Left ventricle myocardium superior (tissue), 1 donor: ENCODE measurements at regions of chr12 and their contacts with region 1.

Region 1: DNA sequence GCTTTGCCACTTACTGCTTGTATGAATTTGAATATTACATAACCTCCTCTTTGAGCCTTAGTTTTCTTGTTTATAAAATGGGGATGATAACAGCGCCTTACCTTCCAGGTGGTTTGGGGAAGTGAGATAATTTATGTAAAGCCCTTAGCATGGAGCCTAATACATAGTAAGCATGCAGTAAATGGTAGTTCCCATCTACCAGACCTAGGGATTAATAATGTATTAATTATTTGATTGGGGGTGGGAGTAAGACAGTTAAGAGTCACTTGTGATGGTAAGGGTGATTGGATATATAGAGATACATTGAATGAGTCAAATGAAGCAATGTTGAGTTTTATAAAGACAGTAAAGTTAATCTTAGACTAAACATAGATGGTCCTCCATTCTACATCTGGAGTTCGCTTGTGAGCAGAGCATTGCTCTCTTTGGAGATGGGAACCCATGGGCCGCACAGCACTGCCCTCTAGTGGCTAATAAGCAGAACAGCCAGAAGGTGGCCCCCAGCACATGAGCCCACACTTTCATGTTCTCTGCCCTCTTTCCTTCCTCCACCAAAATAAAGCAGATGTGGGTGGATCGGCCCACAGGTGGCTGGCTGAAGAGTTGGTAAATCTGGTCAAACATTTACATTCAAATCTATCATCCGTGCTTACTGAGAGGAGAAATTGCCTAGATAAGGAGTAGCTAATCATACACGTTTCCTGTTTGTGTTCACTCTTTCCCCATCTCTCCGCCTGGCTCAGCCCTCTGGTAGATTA is 26.5 kb upstream of the TAMALIN start:
- DNase-seq: peak; percentile 72
- ATAC-seq: peak; percentile 93

Region 2: GRCh38 chr12:51891843-51892242 is 88.4 kb before region 1 on chr12:
- intact Hi-C with region 1: loop called (anchors 2 kb)
- DNase-seq: no peak
- ATAC-seq: no peak